HepG2 (cell line): ENCODE measurements at regions of chr3 and their contacts with region 1.

Region 1: GRCh38 chr3:47475570-47476329 is at the start of gene SCAP:
- DNase-seq: peak; percentile 85
- ATAC-seq: peak; percentile 86
- H3K4me3 ChIP-seq: peak within 1 kb of the TSS; percentile 80 to 97 (median 81)
- H3K27ac ChIP-seq: peak within 1 kb of the TSS; percentile 78
- H3K4me1 ChIP-seq: peaks cover 37% of the 10 kb centered on the region
- H3K27me3 ChIP-seq: no peaks in the 10 kb centered on the region; a peak in 1 of 5 replicates
- CTCF ChIP-seq: peak; percentile 97
- EP300 ChIP-seq: no peak; a peak in 1 of 4 replicates
- POLR2A ChIP-seq: peak in 1 of 2 experiments; percentile 67; a peak in 2 of 4 replicates
- RAD21 ChIP-seq: peak; percentile 94
- total RNA-seq, gene SCAP: 24.0 and 53.3 TPM in 2 replicates

Region 2: DNA sequence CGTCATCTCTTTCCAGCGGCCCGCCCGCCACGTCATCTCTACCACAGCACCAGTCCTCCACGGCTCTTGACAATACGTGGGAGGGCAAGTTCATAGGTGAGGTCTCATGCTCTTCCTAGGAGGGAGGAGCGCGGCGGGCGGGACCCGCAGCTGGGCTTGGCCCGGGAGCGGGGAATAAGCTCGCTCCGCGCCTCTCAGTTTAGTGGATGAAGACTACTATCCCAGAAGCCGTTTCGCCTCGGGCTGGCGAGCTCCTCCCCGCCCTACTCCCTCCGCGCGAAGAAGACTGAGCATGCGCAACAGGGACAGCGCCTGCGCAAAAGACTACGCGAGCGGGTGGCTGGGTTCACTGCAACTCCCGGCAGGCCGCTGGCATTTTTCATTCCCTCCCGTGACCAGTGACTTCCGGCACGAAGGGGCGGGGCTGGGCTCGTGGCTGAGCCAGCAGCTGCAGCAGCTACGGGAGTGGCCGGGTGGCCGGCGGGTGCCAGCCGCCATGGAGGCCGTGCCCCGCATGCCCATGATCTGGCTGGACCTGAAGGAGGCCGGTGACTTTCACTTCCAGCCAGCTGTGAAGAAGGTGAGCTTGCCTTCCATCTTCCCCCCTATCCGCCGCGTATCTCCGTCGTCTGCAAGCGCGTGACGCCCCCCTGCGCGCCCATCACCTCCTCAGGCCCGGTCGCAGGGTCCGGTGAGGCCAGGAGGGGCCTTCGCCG is 95.0 kb before region 1 on chr3 and contains the start of gene PTPN23:
- CTCF ChIA-PET with region 1: no interaction called
- POLR2A ChIA-PET with region 1: interaction called, 6 read pairs
- in situ Hi-C with region 1: no loop called
- intact Hi-C with region 1: loop called (anchors 1 kb)
- DNase-seq: peak; percentile 97
- ATAC-seq: peak; percentile 79
- H3K4me3 ChIP-seq: peak within 1 kb of the TSS; percentile 83 to 99 (median 87)
- H3K27ac ChIP-seq: peak within 1 kb of the TSS; percentile 99
- H3K4me1 ChIP-seq: peaks cover 82% of the 10 kb centered on the region
- H3K27me3 ChIP-seq: no peaks in the 10 kb centered on the region; a peak in 1 of 5 replicates
- CTCF ChIP-seq: peak; percentile 12; the same call in 1 of the 2 replicates
- EP300 ChIP-seq: no peak
- POLR2A ChIP-seq: peak; percentile 84 to 91
- RAD21 ChIP-seq: no peak; the same call in none of the 2 replicates
- total RNA-seq, gene PTPN23: 3.7 and 13.2 TPM in 2 replicates

Region 3: GRCh38 chr3:47440131-47440530 is 35.6 kb before region 1 on chr3:
- CTCF ChIA-PET with region 1: interaction called, 12 read pairs
- POLR2A ChIA-PET with region 1: interaction called, 30 read pairs
- in situ Hi-C with region 1: no loop called
- intact Hi-C with region 1: loop called (anchors 1 kb)
- DNase-seq: peak; percentile 79
- ATAC-seq: peak; percentile 71
- H3K4me3 ChIP-seq: no peak overlapping the region
- H3K27ac ChIP-seq: peak overlapping the region; percentile 60
- H3K4me1 ChIP-seq: peaks cover 63% of the 10 kb centered on the region
- H3K27me3 ChIP-seq: no peaks in the 10 kb centered on the region
- CTCF ChIP-seq: peak; percentile 76
- EP300 ChIP-seq: no peak
- POLR2A ChIP-seq: no peak
- RAD21 ChIP-seq: peak; percentile 85; the same call in 1 of the 2 replicates

Region 4: DNA sequence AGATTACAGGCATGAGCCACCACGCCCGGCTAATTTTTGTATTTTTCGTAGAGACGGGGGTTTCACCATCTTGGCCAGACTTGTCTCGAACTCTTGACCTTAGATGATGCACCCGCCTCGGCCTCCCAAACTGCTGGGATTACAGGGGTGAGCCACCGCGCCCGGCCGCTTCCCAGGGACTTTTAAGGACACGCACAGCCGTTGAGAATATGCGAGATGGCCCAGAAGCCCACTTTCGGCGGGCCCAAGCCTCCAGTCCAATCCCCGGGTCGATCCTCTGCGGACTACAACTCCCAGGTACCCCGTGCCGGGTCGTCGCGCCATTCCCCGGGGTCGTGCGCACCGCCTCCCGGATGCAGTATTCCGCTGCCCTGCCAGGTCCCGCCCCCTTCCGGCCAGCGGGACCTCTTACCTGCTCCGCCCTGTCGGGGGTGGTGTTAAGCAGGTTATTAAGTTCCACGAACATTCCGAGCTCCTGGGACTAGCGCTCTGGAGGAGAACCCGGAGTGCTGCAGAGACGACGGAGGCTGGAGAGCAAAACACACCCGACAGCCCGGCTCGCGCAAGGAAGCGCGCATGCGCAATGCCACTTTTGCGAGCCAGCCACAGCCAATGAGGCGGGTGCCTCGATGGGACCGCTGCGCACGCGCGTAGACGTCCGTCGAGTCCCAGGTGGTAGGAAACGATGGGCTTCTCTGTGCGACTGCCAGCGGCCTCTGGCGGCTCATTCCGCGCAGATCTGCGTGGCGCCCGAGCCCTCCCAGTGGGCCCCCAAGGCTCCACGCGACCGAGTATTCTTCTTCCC is 37.6 kb after region 1 on chr3 and contains the start of gene ELP6:
- CTCF ChIA-PET with region 1: no interaction called
- POLR2A ChIA-PET with region 1: no interaction called
- in situ Hi-C with region 1: no loop called
- intact Hi-C with region 1: loop called (anchors 5 kb)
- DNase-seq: peak; percentile 91
- ATAC-seq: peak; percentile 98
- H3K4me3 ChIP-seq: peak within 1 kb of the TSS; percentile 77 to 87 (median 86)
- H3K27ac ChIP-seq: peak within 1 kb of the TSS; percentile 97
- H3K4me1 ChIP-seq: peaks cover 40% of the 10 kb centered on the region
- H3K27me3 ChIP-seq: no peaks in the 10 kb centered on the region; a peak in 1 of 5 replicates
- CTCF ChIP-seq: peak; percentile 87
- EP300 ChIP-seq: no peak
- POLR2A ChIP-seq: peak; percentile 80 to 87
- RAD21 ChIP-seq: peak; percentile 83
- total RNA-seq, gene ELP6: 38.6 and 45.0 TPM in 2 replicates

Region 5: DNA sequence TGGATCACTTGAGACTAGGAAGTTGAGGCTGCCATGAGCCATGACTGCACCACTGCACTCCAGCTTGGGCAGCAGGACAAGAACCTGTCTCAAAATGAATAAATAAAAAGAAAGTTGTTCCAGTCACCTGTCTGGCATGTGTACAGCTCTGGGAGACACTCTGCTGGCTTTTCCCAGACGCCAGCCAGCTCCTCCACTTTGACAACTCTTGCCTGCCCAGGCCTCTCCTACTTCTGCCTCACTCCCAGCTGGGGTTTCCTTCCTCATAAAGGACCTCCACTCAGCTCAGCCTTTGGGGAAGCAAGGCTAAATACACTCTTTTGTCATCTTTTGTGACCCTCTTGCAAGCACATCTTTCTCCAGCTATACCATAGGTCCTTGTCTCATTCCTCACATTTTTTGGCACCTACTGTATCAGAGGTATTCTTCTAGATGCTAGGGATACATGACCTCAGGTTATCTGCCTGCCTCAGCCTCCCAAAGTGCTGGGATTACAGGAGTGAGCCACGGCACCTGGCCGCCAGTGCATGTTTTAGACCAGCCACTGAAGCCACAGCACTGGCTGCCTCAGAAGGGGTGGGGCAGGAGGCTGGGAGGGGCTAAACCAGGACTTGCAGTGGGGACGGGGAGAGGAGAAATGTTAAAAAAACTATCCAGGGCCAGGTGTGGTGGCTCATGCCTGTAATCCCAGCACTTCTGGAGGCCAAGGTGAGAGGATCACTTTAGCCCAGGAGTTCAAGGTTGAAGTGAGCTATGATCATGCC is 47.7 kb after region 1 on chr3:
- CTCF ChIA-PET with region 1: no interaction called
- POLR2A ChIA-PET with region 1: no interaction called
- in situ Hi-C with region 1: no loop called
- intact Hi-C with region 1: no loop called
- DNase-seq: no peak
- ATAC-seq: no peak
- H3K4me3 ChIP-seq: no peak overlapping the region
- H3K27ac ChIP-seq: no peak overlapping the region
- H3K4me1 ChIP-seq: peaks cover 34% of the 10 kb centered on the region
- H3K27me3 ChIP-seq: no peaks in the 10 kb centered on the region
- CTCF ChIP-seq: no peak
- EP300 ChIP-seq: no peak
- POLR2A ChIP-seq: no peak
- RAD21 ChIP-seq: no peak